AG04450 (cell line): ENCODE measurements at regions of chr7 and their contacts with region 1.

Region 1: DNA sequence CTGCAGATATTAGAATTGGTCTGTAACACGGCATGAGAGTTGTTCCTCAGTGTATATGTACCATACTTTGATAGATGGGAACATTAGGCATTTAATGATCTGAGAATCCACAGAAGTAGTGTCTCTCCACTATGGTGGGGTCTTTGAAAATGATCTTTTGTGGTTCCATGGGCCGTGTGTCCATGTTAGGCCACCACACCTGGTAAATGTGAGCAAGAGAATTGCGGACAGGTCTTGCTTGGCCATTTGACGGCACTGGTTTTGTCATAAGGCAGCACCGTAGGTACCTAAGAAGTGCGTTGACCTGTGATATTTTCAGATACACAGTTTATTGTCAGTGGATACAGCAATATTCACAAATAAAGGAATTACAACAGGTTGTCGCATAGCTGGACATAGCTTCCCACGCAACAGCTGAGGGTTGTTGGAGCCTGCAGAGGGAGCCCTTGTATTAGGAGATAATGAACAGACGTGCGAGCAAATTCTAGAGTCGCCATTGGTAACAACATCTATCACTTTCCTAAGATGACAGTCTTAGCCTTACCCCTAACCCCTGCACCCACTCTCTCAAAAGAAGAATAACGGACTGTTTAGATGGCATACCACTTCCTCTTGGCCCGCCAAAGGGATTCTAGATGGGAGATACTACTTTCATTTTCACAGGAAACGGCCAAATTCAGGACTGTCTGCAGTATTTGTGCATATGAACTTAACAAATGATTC is 111.4 kb downstream of the COL28A1 start:
- DNase-seq: no peak
- H3K4me3 ChIP-seq: peak overlapping the region; percentile 66
- H3K27ac ChIP-seq: no peak overlapping the region
- H3K27me3 ChIP-seq: no peaks in the 10 kb centered on the region
- CTCF ChIP-seq: peak; percentile 91

Region 2: GRCh38 chr7:7438851-7439250 is 14.5 kb after region 1 on chr7:
- CTCF ChIA-PET with region 1: interaction called, 30 read pairs
- POLR2A ChIA-PET with region 1: interaction called, 7 read pairs
- DNase-seq: peak; percentile 95
- H3K4me3 ChIP-seq: no peak overlapping the region
- H3K27ac ChIP-seq: peak overlapping the region; percentile 86
- H3K27me3 ChIP-seq: no peaks in the 10 kb centered on the region
- CTCF ChIP-seq: 0 out of 2 replicates have a peak, but pooled peaks have one; percentile 24

Region 3: DNA sequence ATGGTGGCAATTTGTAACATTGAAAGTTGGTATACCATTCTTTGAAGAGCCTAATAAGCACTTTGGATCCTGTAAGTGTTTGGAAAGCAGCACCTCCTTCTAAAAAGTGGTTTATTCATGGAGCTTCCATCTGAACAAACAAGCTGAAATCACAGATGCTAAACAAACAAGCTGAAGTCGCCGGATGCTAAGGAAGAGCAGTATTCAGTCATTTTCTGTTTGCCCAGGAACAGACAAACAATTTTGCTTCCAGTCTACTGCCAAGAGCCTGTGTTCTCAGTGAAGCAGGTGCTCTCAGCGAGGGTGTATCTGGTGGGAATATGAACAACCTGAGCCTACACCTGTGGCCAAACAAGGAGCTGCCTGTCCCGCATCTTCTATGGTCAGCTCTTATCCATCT is 105.0 kb after region 1 on chr7:
- CTCF ChIA-PET with region 1: interaction called, 22 read pairs
- POLR2A ChIA-PET with region 1: no interaction called
- DNase-seq: no peak
- H3K4me3 ChIP-seq: no peak overlapping the region
- H3K27ac ChIP-seq: no peak overlapping the region
- H3K27me3 ChIP-seq: no peaks in the 10 kb centered on the region
- CTCF ChIP-seq: no peak

Region 4: GRCh38 chr7:7535691-7536090 is 111.4 kb after region 1 on chr7 and contains the start of gene COL28A1:
- CTCF ChIA-PET with region 1: interaction called, 125 read pairs
- POLR2A ChIA-PET with region 1: no interaction called
- DNase-seq: no peak
- H3K4me3 ChIP-seq: no peak within 1 kb of the TSS
- H3K27ac ChIP-seq: no peak within 1 kb of the TSS
- H3K27me3 ChIP-seq: no peaks in the 10 kb centered on the region
- CTCF ChIP-seq: no peak
- polyA plus RNA-seq, gene COL28A1: 0.02 and 0.04 TPM in 2 replicates

Region 5: DNA sequence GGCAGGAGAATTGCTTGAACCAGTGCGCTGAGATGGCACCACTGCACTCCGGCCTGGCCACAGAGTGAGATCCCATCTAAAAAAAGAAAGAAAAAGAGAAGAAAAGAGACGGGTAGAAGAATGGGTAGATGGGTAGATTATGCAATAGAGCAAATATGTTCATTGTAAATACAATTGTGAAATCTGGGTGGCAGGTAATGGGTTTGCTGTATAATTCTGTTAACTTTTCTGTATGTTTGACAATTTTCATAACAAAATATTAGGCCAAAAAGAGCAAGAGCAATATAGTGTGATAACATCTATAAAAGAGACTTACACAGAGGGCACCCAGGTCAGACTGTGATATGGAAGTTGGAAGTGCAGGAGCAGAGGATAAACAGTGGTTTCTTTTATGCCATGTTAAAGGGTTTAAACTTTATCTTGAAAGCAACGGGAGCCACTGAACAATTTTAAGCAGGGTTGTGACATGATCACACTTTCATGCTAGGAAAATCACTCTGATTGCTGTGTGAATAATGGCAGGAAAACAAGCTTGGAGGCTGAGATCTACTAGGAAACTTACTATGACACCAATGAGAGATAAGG is 118.0 kb after region 1 on chr7:
- CTCF ChIA-PET with region 1: interaction called, 125 read pairs
- POLR2A ChIA-PET with region 1: no interaction called
- DNase-seq: no peak
- H3K4me3 ChIP-seq: no peak overlapping the region
- H3K27ac ChIP-seq: no peak overlapping the region
- H3K27me3 ChIP-seq: no peaks in the 10 kb centered on the region
- CTCF ChIP-seq: no peak

Region 6: GRCh38 chr7:8871716-8872115 is 1447.4 kb after region 1 on chr7:
- CTCF ChIA-PET with region 1: no interaction called
- POLR2A ChIA-PET with region 1: no interaction called
- DNase-seq: no peak
- H3K4me3 ChIP-seq: no peak overlapping the region
- H3K27ac ChIP-seq: no peak overlapping the region
- H3K27me3 ChIP-seq: no peaks in the 10 kb centered on the region
- CTCF ChIP-seq: no peak